Dorsolateral prefrontal cortex (tissue), 120 donors: ENCODE measurements at regions of chr20 and their contacts with region 1.

Region 1: GRCh38 chr20:32762149-32762753 is at the start of gene DNMT3B:
- DNase-seq: peak; percentile 40 to 80 (median 62)
- H3K4me3 ChIP-seq: peak within 1 kb of the TSS; percentile 48 to 86 (median 75)
- H3K27ac ChIP-seq: peak within 1 kb of the TSS in 4 of 59 donors; percentile 36 to 70 (median 45)
- H3K27me3 ChIP-seq: no peaks in the 10 kb centered on the region
- CTCF ChIP-seq: peak in 21 of 56 donors; percentile 7 to 50 (median 28)
- total RNA-seq, gene DNMT3B: 0.67 to 2.8 (median 1.5) TPM

Region 2: GRCh38 chr20:32819992-32820710 is 57.9 kb after region 1 on chr20:
- intact Hi-C with region 1: loop called in 1 of 2 experiments (anchors 5 kb)
- DNase-seq: peak in 6 of 10 donors; percentile 23 to 70 (median 44)
- H3K4me3 ChIP-seq: peak overlapping the region; percentile 51 to 91 (median 76)
- H3K27ac ChIP-seq: peak overlapping the region in 58 of 59 donors; percentile 15 to 94 (median 82)
- H3K27me3 ChIP-seq: no peaks in the 10 kb centered on the region
- CTCF ChIP-seq: peak in 7 of 56 donors; percentile 0 to 27 (median 17)

Region 3: DNA sequence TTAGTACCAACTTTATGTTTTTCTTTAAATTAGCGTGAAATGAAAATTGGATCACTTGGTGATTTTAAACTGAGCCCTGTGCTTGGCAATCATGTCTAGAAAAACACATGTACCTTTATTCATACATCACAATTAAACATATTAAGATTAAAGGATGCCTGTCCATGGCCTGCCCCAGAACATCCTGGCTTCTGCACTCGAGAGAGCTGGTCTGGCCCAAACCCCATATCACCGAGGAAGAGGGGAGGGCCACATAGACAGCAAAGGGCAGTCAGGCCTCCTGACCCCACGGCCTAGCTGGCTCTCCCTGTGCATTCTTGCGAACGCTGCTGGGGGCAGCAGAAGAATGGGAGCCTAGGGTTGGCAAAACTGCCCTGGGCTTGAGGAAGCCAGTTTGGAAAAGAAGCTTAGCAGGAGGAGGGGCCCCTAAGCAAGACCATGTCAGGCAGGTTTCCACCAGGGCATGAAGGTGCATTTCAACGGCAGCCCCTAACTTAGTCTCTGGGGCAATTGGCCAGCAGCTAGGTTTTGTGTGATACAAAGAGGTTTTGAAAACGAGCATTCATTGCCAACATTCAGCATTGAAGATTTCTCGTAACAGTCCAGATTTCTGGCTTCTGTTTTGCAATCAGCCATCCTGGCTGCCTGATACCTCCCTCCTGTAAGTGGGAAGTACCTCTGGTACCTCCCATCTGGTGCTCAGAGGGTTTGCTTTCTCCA is 300.0 kb after region 1 on chr20:
- intact Hi-C with region 1: no loop called
- DNase-seq: no peak
- H3K4me3 ChIP-seq: no peak overlapping the region
- H3K27ac ChIP-seq: no peak overlapping the region
- H3K27me3 ChIP-seq: no peaks in the 10 kb centered on the region
- CTCF ChIP-seq: no peak